ENCODE measurements at regions of chr18 and their contacts with region 1.

Region 1: DNA sequence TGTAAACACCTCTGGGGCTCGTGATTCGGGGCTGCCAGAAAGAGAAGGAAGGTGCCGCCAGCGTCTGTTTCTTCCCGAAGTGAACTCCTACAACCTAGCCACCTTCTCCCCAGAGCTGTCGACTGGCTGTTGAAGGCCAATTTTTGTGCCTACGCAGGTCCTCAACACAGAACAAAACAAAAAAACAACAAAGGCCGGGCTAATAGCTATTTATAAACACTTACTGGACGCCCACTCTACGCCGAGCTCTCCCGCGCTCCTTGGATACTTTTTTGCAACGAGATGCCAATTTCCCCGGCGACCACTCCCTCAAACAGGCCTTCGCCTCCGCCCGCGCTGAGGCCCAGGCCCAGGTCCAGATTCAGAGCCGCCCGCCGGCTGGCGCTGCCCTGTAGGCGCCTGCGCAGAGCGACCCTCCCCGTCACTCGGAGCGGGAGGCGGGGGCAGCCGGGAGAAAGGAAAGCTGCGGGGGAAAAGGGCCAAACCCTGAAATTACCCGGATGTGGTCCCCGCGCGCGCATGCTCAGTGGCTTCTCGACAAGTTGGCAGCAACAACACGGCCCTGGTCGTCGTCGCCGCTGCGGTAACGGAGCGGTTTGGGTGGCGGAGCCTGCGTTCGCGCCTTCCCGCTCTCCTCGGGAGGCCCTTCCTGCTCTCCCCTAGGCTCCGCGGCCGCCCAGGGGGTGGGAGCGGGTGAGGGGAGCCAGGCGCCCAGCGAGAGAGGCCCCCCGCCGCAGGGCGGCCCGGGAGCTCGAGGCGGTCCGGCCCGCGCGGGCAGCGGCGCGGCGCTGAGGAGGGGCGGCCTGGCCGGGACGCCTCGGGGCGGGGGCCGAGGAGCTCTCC is at the start of gene SMAD4:
- DNase-seq: peak; percentile 98
- H3K4me3 Mint-ChIP-seq: peak within 1 kb of the TSS; percentile 98
- H3K27ac Mint-ChIP-seq: peak within 1 kb of the TSS; percentile 97
- H3K4me1 Mint-ChIP-seq: peaks cover 45% of the 10 kb centered on the region
- H3K27me3 Mint-ChIP-seq: no peaks in the 10 kb centered on the region
- total RNA-seq, gene SMAD4: 72.0 to 75.1 TPM

Region 2: GRCh38 chr18:50878345-50879301 is 151.3 kb before region 1 on chr18 and contains the start of gene ME2:
- CTCF ChIA-PET with region 1: no interaction called
- intact Hi-C with region 1: loop called (anchors 1 kb)
- DNase-seq: peak; percentile 90
- H3K4me3 Mint-ChIP-seq: peak within 1 kb of the TSS; percentile 98
- H3K27ac Mint-ChIP-seq: peak within 1 kb of the TSS; percentile 99
- H3K4me1 Mint-ChIP-seq: peaks cover 27% of the 10 kb centered on the region
- H3K27me3 Mint-ChIP-seq: peaks cover 3% of the 10 kb centered on the region
- total RNA-seq, gene ME2: 137 to 146 TPM

Region 3: GRCh38 chr18:50902797-50903196 is 127.1 kb before region 1 on chr18:
- CTCF ChIA-PET with region 1: no interaction called
- intact Hi-C with region 1: loop called (anchors 1 kb)
- DNase-seq: no peak
- H3K4me3 Mint-ChIP-seq: no peak overlapping the region
- H3K27ac Mint-ChIP-seq: no peak overlapping the region
- H3K4me1 Mint-ChIP-seq: peaks cover 35% of the 10 kb centered on the region
- H3K27me3 Mint-ChIP-seq: no peaks in the 10 kb centered on the region

Region 4: GRCh38 chr18:50967714-50968661 is 61.9 kb before region 1 on chr18 and contains the start of gene ELAC1:
- CTCF ChIA-PET with region 1: interaction called, 3 read pairs
- intact Hi-C with region 1: loop called (anchors 1 kb)
- DNase-seq: peak; percentile 63
- H3K4me3 Mint-ChIP-seq: peak within 1 kb of the TSS; percentile 94
- H3K27ac Mint-ChIP-seq: peak within 1 kb of the TSS; percentile 91
- H3K4me1 Mint-ChIP-seq: peaks cover 23% of the 10 kb centered on the region
- H3K27me3 Mint-ChIP-seq: no peaks in the 10 kb centered on the region
- total RNA-seq, gene ELAC1: 2.7 to 4.0 TPM

Region 5: DNA sequence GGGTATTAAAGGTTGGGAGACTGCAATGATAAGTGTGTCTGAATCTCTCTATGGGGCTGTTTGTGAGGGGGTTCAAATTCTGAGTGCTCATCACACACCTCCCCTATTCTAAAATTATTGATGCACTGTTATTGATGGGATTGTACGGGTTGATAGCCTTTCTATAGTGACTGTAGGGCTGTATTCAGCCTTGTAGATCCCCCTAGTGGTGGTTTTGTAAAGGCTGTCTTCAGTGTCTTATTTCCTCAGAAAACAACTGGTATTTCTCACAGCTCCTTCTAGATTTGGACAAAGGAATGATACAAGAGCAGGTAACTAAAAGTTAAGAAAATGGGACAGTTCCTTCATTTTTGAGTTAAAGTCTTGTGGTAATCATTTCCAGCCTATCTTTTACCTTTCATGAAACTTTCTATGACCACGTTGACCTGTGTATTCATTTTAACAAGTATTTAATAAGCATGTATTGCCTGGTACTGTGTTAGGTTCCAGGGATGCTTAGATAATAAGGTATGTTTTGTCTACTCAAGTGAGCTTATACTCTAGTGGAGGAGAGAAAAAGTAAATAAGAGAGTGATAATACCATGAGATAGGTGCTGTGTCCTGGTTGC is 21.3 kb after region 1 on chr18:
- CTCF ChIA-PET with region 1: interaction called, 26 read pairs
- intact Hi-C with region 1: loop called (anchors 1 kb)
- DNase-seq: no peak
- H3K4me3 Mint-ChIP-seq: no peak overlapping the region
- H3K27ac Mint-ChIP-seq: no peak overlapping the region
- H3K4me1 Mint-ChIP-seq: peaks cover 24% of the 10 kb centered on the region
- H3K27me3 Mint-ChIP-seq: no peaks in the 10 kb centered on the region

Region 6: GRCh38 chr18:51133580-51134160 is 103.8 kb after region 1 on chr18:
- CTCF ChIA-PET with region 1: no interaction called
- intact Hi-C with region 1: no loop called
- DNase-seq: no peak
- H3K4me3 Mint-ChIP-seq: no peak overlapping the region
- H3K27ac Mint-ChIP-seq: no peak overlapping the region
- H3K4me1 Mint-ChIP-seq: no peaks in the 10 kb centered on the region
- H3K27me3 Mint-ChIP-seq: no peaks in the 10 kb centered on the region

Region 7: GRCh38 chr18:51153659-51154371 is 123.9 kb after region 1 on chr18:
- CTCF ChIA-PET with region 1: no interaction called
- intact Hi-C with region 1: loop called (anchors 1 kb)
- DNase-seq: peak; percentile 70
- H3K4me3 Mint-ChIP-seq: peak overlapping the region; percentile 79
- H3K27ac Mint-ChIP-seq: peak overlapping the region; percentile 99
- H3K4me1 Mint-ChIP-seq: peaks cover 58% of the 10 kb centered on the region
- H3K27me3 Mint-ChIP-seq: no peaks in the 10 kb centered on the region

Measured in activated naive CD4-positive, alpha-beta T cell treated with anti-CD3 and anti-CD28 coated beads for 36 hours (primary cell).